Activated naive CD4-positive, alpha-beta T cell treated with anti-CD3 and anti-CD28 coated beads for 36 hours (primary cell): ENCODE measurements at regions of chr2 and their contacts with region 1.

Region 1: GRCh38 chr2:11154923-11155380 is 315 bp upstream of the SLC66A3 start:
- DNase-seq: peak; percentile 99
- H3K4me3 Mint-ChIP-seq: peak overlapping the region; percentile 76
- H3K27ac Mint-ChIP-seq: peak overlapping the region; percentile 61
- H3K4me1 Mint-ChIP-seq: peaks cover 9% of the 10 kb centered on the region
- H3K27me3 Mint-ChIP-seq: no peaks in the 10 kb centered on the region

Region 2: DNA sequence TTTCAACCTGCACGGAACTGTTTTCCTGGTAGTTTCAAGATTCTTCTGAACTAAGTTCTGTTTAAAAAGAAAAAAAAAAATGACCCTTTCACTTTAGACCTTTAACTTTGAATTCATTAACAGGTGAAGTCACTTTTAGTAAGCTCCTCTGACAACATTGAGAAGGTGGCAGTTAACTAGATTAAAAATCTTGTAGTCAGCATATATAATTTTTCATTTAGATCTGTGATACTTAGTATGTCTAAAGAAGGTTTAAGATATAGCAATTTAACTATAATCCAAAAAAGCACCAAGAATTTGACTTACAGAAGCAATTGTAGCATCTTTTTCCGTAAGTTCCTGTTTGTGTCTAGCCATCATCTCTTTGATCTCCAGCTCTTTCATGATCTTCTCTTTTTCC is 45.7 kb after region 1 on chr2:
- CTCF ChIA-PET with region 1: no interaction called
- intact Hi-C with region 1: loop called (anchors 2 kb)
- DNase-seq: no peak
- H3K4me3 Mint-ChIP-seq: no peak overlapping the region
- H3K27ac Mint-ChIP-seq: no peak overlapping the region
- H3K4me1 Mint-ChIP-seq: peaks cover 9% of the 10 kb centered on the region
- H3K27me3 Mint-ChIP-seq: no peaks in the 10 kb centered on the region

Region 3: GRCh38 chr2:11344342-11344955 is 189.5 kb after region 1 on chr2 and contains the start of gene ROCK2:
- CTCF ChIA-PET with region 1: no interaction called
- intact Hi-C with region 1: loop called (anchors 1 kb)
- DNase-seq: peak; percentile 72
- H3K4me3 Mint-ChIP-seq: peak within 1 kb of the TSS; percentile 99
- H3K27ac Mint-ChIP-seq: peak within 1 kb of the TSS; percentile 85
- H3K4me1 Mint-ChIP-seq: peaks cover 29% of the 10 kb centered on the region
- H3K27me3 Mint-ChIP-seq: no peaks in the 10 kb centered on the region
- total RNA-seq, gene ROCK2: 8.4 to 9.4 TPM

Region 4: GRCh38 chr2:11446733-11447248 is 291.8 kb after region 1 on chr2:
- CTCF ChIA-PET with region 1: no interaction called
- intact Hi-C with region 1: loop called (anchors 1 kb)
- DNase-seq: peak; percentile 60
- H3K4me3 Mint-ChIP-seq: no peak overlapping the region
- H3K27ac Mint-ChIP-seq: no peak overlapping the region
- H3K4me1 Mint-ChIP-seq: no peaks in the 10 kb centered on the region
- H3K27me3 Mint-ChIP-seq: no peaks in the 10 kb centered on the region

Region 5: GRCh38 chr2:11465497-11466406 is 310.8 kb after region 1 on chr2 and contains the start of gene E2F6:
- CTCF ChIA-PET with region 1: no interaction called
- intact Hi-C with region 1: loop called (anchors 1 kb)
- DNase-seq: peak; percentile 89
- H3K4me3 Mint-ChIP-seq: peak within 1 kb of the TSS; percentile 91
- H3K27ac Mint-ChIP-seq: peak within 1 kb of the TSS; percentile 83
- H3K4me1 Mint-ChIP-seq: peaks cover 40% of the 10 kb centered on the region
- H3K27me3 Mint-ChIP-seq: no peaks in the 10 kb centered on the region
- total RNA-seq, gene E2F6: 8.7 to 9.4 TPM

Region 6: DNA sequence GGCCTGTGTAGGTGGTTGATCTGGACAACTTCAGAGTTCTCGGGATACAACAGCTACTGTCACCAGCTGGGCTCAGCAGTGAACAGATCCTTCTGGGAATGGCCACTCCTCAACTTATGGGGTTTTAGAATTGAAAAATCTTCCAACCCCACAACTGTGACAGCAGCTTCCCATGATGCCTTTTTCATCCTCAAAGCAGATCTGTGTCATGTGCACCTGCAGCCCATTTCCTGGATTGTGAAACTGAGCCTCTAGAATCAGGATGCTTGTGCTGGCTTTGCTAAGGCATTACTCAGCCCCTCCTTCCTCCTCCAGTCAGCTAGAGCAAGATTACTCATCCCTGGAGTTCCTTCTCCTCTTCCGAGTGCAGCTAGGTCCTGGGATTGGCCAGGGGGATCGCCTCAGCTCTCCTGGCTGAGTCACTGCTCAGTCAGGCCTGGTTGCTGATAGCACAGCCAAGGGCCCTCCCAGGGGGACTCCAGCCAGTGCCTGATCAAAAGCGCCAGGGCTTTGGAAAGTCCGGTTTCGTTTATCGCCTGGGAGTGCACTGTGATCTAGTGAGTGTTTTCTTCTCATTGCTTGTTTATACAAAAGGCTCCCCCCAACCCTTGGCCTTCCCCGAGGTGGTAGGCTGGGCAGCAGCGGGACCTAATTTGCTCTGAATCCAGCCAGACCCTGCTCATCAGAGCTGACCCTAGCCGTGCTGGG is 589.0 kb after region 1 on chr2:
- CTCF ChIA-PET with region 1: no interaction called
- intact Hi-C with region 1: loop called (anchors 2 kb)
- DNase-seq: peak; percentile 92
- H3K4me3 Mint-ChIP-seq: no peak overlapping the region
- H3K27ac Mint-ChIP-seq: peak overlapping the region; percentile 69
- H3K4me1 Mint-ChIP-seq: peaks cover 47% of the 10 kb centered on the region
- H3K27me3 Mint-ChIP-seq: no peaks in the 10 kb centered on the region